Endothelial cell of umbilical vein (primary cell): ENCODE measurements at regions of chr9 and their contacts with region 1.

Region 1: GRCh38 chr9:87497604-87498045 is at the start of gene DAPK1:
- DNase-seq: peak; percentile 84
- H3K4me3 ChIP-seq: peak within 1 kb of the TSS; percentile 72 to 93 (median 77)
- H3K27ac ChIP-seq: peak within 1 kb of the TSS; percentile 78
- H3K4me1 ChIP-seq: peaks cover 35% of the 10 kb centered on the region
- H3K27me3 ChIP-seq: no peaks in the 10 kb centered on the region
- CTCF ChIP-seq: peak; percentile 9 to 42
- POLR2A ChIP-seq: peak; percentile 71
- total RNA-seq, gene DAPK1: 93.4 and 119 TPM in 2 replicates

Region 2: DNA sequence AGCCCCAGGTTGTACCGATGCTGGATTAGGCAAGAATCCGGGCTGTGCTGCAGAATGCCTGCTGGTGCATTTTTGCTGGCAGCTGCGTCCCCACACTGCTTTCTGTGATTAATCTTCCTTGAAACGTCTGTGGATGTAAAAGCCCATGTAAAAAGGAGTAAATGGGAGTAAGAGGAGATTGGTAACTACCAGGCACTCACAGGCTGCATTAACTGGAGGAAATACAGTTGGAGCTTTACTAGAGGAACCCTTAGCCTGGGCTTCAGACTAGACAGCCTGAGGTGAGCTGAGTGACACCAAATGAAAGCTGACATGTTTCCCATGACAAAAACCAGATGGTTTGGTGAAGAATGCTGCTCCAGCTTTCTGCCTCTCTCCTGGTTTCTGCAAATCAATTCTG is 359.9 kb before region 1 on chr9:
- CTCF ChIA-PET with region 1: no interaction called
- POLR2A ChIA-PET with region 1: no interaction called
- dilution Hi-C with region 1: no loop called
- intact Hi-C with region 1: no loop called
- DNase-seq: no peak
- H3K4me3 ChIP-seq: no peak overlapping the region
- H3K27ac ChIP-seq: no peak overlapping the region
- H3K4me1 ChIP-seq: no peaks in the 10 kb centered on the region
- H3K27me3 ChIP-seq: no peaks in the 10 kb centered on the region
- CTCF ChIP-seq: no peak
- POLR2A ChIP-seq: no peak

Region 3: GRCh38 chr9:87516222-87516925 is 18.7 kb after region 1 on chr9:
- CTCF ChIA-PET with region 1: interaction called, 27 read pairs
- POLR2A ChIA-PET with region 1: interaction called, 3 read pairs
- dilution Hi-C with region 1: no loop called
- intact Hi-C with region 1: loop called (anchors 1 kb)
- DNase-seq: peak; percentile 90
- H3K4me3 ChIP-seq: no peak overlapping the region
- H3K27ac ChIP-seq: peak overlapping the region; percentile 64
- H3K4me1 ChIP-seq: peaks cover 52% of the 10 kb centered on the region
- H3K27me3 ChIP-seq: no peaks in the 10 kb centered on the region
- CTCF ChIP-seq: no peak
- POLR2A ChIP-seq: peak; percentile 34

Region 4: GRCh38 chr9:87569518-87569917 is 71.9 kb after region 1 on chr9:
- CTCF ChIA-PET with region 1: interaction called, 3 read pairs
- POLR2A ChIA-PET with region 1: no interaction called
- dilution Hi-C with region 1: no loop called
- intact Hi-C with region 1: loop called (anchors 2 kb)
- DNase-seq: peak; percentile 95
- H3K4me3 ChIP-seq: peak overlapping the region in 1 of 3 experiments; percentile 21
- H3K27ac ChIP-seq: peak overlapping the region; percentile 19
- H3K4me1 ChIP-seq: peaks cover 30% of the 10 kb centered on the region
- H3K27me3 ChIP-seq: no peaks in the 10 kb centered on the region
- CTCF ChIP-seq: no peak
- POLR2A ChIP-seq: peak; percentile 68

Region 5: GRCh38 chr9:87606841-87607521 is 109.4 kb after region 1 on chr9:
- CTCF ChIA-PET with region 1: interaction called, 3 read pairs
- POLR2A ChIA-PET with region 1: no interaction called
- dilution Hi-C with region 1: no loop called
- intact Hi-C with region 1: loop called (anchors 1 kb)
- DNase-seq: peak; percentile 78
- H3K4me3 ChIP-seq: no peak overlapping the region
- H3K27ac ChIP-seq: peak overlapping the region; percentile 86
- H3K4me1 ChIP-seq: peaks cover 18% of the 10 kb centered on the region
- H3K27me3 ChIP-seq: no peaks in the 10 kb centered on the region
- CTCF ChIP-seq: no peak
- POLR2A ChIP-seq: no peak

Region 6: GRCh38 chr9:87662808-87663528 is 165.3 kb after region 1 on chr9:
- CTCF ChIA-PET with region 1: interaction called, 22 read pairs
- POLR2A ChIA-PET with region 1: no interaction called
- dilution Hi-C with region 1: no loop called
- intact Hi-C with region 1: loop called (anchors 1 kb)
- DNase-seq: peak; percentile 74
- H3K4me3 ChIP-seq: no peak overlapping the region
- H3K27ac ChIP-seq: no peak overlapping the region
- H3K4me1 ChIP-seq: no peaks in the 10 kb centered on the region
- H3K27me3 ChIP-seq: no peaks in the 10 kb centered on the region
- CTCF ChIP-seq: peak; percentile 80 to 87
- POLR2A ChIP-seq: no peak

Region 7: GRCh38 chr9:87812375-87813118 is 314.9 kb after region 1 on chr9:
- CTCF ChIA-PET with region 1: no interaction called
- POLR2A ChIA-PET with region 1: no interaction called
- dilution Hi-C with region 1: no loop called
- intact Hi-C with region 1: loop called (anchors 10 kb)
- DNase-seq: peak; percentile 49
- H3K4me3 ChIP-seq: no peak overlapping the region
- H3K27ac ChIP-seq: no peak overlapping the region
- H3K4me1 ChIP-seq: no peaks in the 10 kb centered on the region
- H3K27me3 ChIP-seq: peaks cover 0 to 5% of the 10 kb centered on the region in 2 experiments
- CTCF ChIP-seq: peak; percentile 89 to 99
- POLR2A ChIP-seq: no peak